ENCODE measurements at regions of chr7 and their contacts with region 1.

Region 1: DNA sequence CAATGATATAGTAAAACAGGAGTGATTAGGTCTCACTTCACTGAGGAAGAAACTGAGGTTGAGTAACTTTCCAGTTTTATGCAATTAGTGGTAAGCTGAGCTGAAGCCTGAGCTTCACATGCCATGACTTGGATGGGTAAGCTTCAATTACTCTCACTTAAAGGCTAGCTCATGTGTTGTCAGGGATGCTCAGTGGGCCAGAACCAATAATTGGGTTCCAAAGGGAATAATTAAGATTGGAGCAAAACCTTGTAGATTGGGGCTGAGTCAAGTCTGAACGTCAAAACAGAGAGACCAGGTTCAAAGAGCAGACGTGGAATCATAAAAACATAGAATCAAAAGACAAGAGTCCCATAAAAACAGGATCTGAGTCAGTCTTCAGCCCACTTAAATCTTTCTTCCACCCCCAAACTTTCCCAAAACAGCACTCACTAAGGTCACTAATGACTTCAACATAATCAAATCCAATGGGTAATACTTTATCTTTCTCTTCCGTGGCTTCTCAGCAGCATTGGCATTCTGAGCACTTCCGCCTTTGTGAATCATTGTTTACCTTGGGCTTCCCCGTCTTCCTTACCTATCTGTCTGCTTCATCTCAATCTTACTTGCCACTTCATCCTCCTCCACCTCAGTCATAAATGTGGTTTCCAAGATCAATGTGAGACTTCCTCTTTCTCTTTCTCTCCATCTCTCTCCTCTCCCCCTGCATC is 23.0 kb upstream of the EGFR start:
- DNase-seq: peak; percentile 17
- H3K4me3 Mint-ChIP-seq: peak overlapping the region; percentile 3
- H3K27ac Mint-ChIP-seq: peak overlapping the region; percentile 78
- H3K4me1 Mint-ChIP-seq: peaks cover 28% of the 10 kb centered on the region
- H3K27me3 Mint-ChIP-seq: peaks cover 12% of the 10 kb centered on the region

Region 2: DNA sequence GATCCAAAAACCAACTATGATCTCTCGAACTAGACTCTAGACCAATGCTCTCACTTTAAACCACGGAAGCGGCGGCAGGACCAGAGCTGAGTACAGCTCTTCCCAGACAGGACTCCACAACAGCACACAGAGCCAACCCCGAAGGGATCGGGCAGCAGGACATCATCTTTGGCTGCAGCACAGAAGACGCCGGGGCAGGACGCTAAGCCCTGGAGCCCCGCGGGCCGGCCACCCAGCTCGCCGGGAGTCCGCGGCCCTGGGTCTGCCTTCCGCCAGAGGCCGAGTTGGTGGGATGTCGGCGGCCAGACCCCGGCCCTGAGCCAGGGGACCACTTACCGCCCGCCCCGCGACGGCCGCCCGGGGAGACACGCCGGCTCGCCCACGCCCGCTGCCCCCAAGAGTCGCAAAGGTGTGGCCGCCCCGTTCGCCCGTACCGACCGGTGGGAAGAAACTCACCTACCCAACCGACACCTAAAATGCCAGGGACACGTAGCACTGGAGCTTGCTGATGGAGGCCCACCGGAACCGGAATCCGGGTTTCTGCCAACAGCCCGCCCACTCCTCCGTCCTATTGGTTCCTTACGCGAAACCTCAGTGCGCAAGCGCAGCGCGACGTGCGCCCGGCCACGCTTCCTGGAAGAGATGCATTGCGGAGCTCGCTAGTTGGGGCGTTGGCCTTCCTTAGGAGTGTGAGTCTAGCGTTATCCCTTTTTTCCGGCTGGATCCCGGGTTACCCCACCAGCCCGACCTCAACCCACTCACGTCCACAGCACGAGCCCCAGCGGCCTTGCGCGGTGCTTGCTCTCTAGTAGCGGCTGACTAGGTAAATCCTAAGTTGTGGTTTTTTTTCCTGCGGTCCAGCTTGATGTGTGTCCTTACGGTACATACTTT is 236.8 kb before region 1 on chr7 and contains the start of gene SEC61G:
- intact Hi-C with region 1: loop called (anchors 1 kb)
- DNase-seq: peak; percentile 94
- H3K4me3 Mint-ChIP-seq: peak within 1 kb of the TSS; percentile 100
- H3K27ac Mint-ChIP-seq: peak within 1 kb of the TSS; percentile 97
- H3K4me1 Mint-ChIP-seq: peaks cover 32% of the 10 kb centered on the region
- H3K27me3 Mint-ChIP-seq: peaks cover 19% of the 10 kb centered on the region
- total RNA-seq, gene SEC61G: 194 and 200 TPM in 2 replicates

Region 3: DNA sequence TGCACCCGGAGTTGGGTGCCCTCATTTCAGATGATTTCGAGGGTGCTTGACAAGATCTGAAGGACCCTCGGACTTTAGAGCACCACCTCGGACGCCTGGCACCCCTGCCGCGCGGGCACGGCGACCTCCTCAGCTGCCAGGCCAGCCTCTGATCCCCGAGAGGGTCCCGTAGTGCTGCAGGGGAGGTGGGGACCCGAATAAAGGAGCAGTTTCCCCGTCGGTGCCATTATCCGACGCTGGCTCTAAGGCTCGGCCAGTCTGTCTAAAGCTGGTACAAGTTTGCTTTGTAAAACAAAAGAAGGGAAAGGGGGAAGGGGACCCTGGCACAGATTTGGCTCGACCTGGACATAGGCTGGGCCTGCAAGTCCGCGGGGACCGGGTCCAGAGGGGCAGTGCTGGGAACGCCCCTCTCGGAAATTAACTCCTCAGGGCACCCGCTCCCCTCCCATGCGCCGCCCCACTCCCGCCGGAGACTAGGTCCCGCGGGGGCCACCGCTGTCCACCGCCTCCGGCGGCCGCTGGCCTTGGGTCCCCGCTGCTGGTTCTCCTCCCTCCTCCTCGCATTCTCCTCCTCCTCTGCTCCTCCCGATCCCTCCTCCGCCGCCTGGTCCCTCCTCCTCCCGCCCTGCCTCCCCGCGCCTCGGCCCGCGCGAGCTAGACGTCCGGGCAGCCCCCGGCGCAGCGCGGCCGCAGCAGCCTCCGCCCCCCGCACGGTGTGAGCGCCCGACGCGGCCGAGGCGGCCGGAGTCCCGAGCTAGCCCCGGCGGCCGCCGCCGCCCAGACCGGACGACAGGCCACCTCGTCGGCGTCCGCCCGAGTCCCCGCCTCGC is 22.8 kb after region 1 on chr7 and contains the start of gene EGFR:
- intact Hi-C with region 1: no loop called
- DNase-seq: no peak
- H3K4me3 Mint-ChIP-seq: no peak within 1 kb of the TSS
- H3K27ac Mint-ChIP-seq: no peak within 1 kb of the TSS
- H3K4me1 Mint-ChIP-seq: peaks cover 1% of the 10 kb centered on the region
- H3K27me3 Mint-ChIP-seq: peaks cover 53% of the 10 kb centered on the region
- total RNA-seq, gene EGFR: not detected in 2 replicates

Region 4: GRCh38 chr7:55086413-55087201 is 90.8 kb after region 1 on chr7:
- intact Hi-C with region 1: loop called (anchors 5 kb)
- DNase-seq: no peak
- H3K4me3 Mint-ChIP-seq: peak overlapping the region; percentile 7
- H3K27ac Mint-ChIP-seq: peak overlapping the region; percentile 1
- H3K4me1 Mint-ChIP-seq: peaks cover 14% of the 10 kb centered on the region
- H3K27me3 Mint-ChIP-seq: peaks cover 24% of the 10 kb centered on the region

Region 5: DNA sequence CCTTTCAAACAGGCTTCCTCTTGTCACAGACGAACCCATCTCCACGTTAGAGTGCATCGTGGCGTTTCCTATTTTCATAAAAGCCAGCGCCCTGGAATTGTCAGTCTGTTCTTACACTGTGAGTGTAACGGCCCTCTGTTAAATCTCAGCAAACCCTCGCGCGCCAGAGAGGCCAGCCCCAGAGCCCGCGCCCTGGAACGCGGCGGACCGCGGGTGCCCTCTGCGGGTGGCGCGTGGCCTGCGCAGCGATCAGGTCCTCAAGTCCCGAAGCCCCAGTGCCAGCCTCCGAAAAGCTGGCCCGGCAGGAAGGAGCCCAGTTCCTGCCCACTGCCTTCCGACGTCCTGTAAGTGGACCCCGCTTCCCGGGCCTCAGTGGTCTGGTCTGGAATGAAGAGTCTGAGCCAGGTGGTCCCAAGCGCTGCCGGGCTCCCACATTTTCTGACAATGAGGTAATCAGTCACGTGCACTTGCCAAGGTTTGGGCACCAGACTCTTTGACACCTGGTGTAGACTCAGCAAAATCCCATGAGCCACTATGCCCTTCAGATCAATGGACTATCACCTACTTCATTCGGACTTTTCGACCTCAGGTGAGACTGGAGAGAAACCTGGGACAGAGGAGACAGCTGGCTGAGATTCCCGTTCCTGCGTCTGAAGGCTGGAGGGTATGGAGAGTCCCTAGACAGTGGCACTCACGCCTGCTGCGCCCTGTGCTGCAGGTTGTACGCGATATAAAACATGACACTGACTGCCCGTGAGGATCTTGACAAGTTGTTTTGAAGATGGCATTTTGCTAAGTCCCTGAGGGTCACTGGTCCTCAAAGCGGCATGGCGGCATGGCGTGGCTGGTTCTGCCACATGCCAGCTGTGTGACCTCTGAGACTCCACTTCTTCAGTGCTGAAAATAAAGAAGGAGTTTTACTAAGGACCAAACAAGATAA is 260.0 kb after region 1 on chr7:
- intact Hi-C with region 1: loop called (anchors 10 kb)
- DNase-seq: peak; percentile 57
- H3K4me3 Mint-ChIP-seq: peak overlapping the region; percentile 86
- H3K27ac Mint-ChIP-seq: no peak overlapping the region
- H3K4me1 Mint-ChIP-seq: peaks cover 5% of the 10 kb centered on the region
- H3K27me3 Mint-ChIP-seq: peaks cover 43% of the 10 kb centered on the region

Region 6: DNA sequence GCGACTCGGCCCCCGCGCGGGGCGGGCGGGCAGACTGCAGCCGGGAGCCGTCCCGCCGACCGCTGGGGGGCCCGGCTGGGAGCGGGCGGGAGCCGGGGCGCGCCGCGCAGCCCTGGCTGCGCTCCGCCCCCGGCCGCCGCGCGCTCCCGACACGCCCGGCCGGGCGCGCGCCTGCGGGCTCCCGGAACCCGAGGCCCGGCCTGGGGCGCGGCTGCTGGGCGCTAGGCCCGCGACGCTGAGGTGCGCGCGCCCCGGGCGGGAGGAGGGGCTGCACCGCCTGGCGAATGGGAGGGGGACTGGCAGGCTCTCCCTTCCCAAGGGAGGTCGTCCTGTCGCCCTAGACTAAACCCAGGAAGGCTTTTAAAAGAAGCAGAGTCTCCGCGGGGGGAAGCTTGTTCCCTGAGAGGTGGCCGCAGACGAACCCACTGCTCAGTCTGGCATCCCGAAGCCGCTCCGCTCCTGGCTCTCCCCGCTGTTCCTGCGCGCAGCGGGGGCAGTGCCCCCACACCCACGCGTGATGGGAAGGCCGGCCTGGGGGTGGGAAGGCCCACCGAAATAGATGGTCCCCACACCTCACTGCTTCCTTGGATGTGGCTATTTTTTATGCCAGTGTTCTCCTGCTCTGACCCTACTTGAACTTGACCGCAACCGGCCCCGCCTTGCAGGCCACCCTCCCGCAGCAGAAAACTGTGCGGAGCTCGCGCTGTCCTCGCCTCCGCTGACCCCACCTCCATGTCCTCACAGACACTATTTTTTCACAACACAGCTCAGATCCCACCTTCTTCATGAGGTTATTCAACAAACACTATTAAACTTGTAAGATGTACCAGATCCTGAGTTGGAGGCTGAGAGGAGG is 576.8 kb after region 1 on chr7 and contains the start of gene VOPP1:
- intact Hi-C with region 1: loop called (anchors 5 kb)
- DNase-seq: peak; percentile 50
- H3K4me3 Mint-ChIP-seq: peak within 1 kb of the TSS; percentile 87
- H3K27ac Mint-ChIP-seq: peak within 1 kb of the TSS; percentile 90
- H3K4me1 Mint-ChIP-seq: peaks cover 51% of the 10 kb centered on the region
- H3K27me3 Mint-ChIP-seq: no peaks in the 10 kb centered on the region
- total RNA-seq, gene VOPP1: 53.7 and 56.0 TPM in 2 replicates